ENCODE measurements at regions of chr18 and their contacts with region 1.

Region 1: GRCh38 chr18:50967714-50968661 is at the start of gene ELAC1:
- DNase-seq: peak; percentile 63
- H3K4me3 Mint-ChIP-seq: peak within 1 kb of the TSS; percentile 95
- H3K27ac Mint-ChIP-seq: peak within 1 kb of the TSS; percentile 96
- H3K4me1 Mint-ChIP-seq: peaks cover 22% of the 10 kb centered on the region
- H3K27me3 Mint-ChIP-seq: peaks cover 2% of the 10 kb centered on the region
- total RNA-seq, gene ELAC1: 7.5 to 9.1 TPM

Region 2: GRCh38 chr18:50956116-50956515 is 11.9 kb before region 1 on chr18:
- CTCF ChIA-PET with region 1: interaction called, 16 read pairs
- POLR2A ChIA-PET with region 1: no interaction called
- DNase-seq: no peak
- H3K4me3 Mint-ChIP-seq: no peak overlapping the region
- H3K27ac Mint-ChIP-seq: no peak overlapping the region
- H3K4me1 Mint-ChIP-seq: no peaks in the 10 kb centered on the region
- H3K27me3 Mint-ChIP-seq: peaks cover 3% of the 10 kb centered on the region

Region 3: DNA sequence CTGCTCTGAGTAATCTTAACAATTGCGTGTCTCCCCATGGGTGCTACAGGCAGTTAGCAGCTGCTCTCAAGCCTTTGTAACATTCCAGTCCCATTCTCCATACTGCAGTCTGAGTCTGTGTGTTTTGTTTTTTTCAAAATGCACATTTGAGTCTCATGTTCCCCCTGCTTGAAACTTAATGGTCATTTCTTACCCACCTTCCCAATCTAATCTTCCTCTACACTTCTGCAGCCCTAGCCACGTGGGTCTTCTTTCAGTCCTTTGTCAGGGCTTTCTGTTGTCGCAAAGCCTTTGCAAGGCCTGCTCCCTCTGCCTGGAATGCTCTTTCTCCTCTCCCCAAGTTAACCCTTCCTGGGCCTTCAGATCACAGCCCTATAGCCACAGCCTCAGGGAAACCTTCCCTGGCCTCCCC is 24.4 kb after region 1 on chr18:
- CTCF ChIA-PET with region 1: no interaction called
- POLR2A ChIA-PET with region 1: no interaction called
- DNase-seq: no peak
- H3K4me3 Mint-ChIP-seq: no peak overlapping the region
- H3K27ac Mint-ChIP-seq: no peak overlapping the region
- H3K4me1 Mint-ChIP-seq: no peaks in the 10 kb centered on the region
- H3K27me3 Mint-ChIP-seq: no peaks in the 10 kb centered on the region